ENCODE measurements at regions of chr11 and their contacts with region 1.

Region 1: GRCh38 chr11:8033305-8034105 is 46.4 kb downstream of the EIF3F start:
- DNase-seq: peak; percentile 85 to 95 (median 90)
- H3K4me3 ChIP-seq: no peak overlapping the region
- H3K27ac ChIP-seq: no peak overlapping the region
- H3K4me1 ChIP-seq: peaks cover 0 to 9% (median 3%) of the 10 kb centered on the region in 3 donors
- H3K27me3 ChIP-seq: no peaks in the 10 kb centered on the region
- CTCF ChIP-seq: peak; percentile 88

Region 2: GRCh38 chr11:8099291-8099899 is 65.9 kb after region 1 on chr11:
- intact Hi-C with region 1: loop called (anchors 10 kb)
- DNase-seq: peak in 4 of 5 donors; percentile 82 to 88 (median 83)
- H3K4me3 ChIP-seq: no peak overlapping the region
- H3K27ac ChIP-seq: no peak overlapping the region
- H3K4me1 ChIP-seq: peaks cover 0 to 4% (median 1%) of the 10 kb centered on the region in 3 donors
- H3K27me3 ChIP-seq: no peaks in the 10 kb centered on the region
- CTCF ChIP-seq: peak; percentile 72

Region 3: GRCh38 chr11:8126649-8127289 is 93.3 kb after region 1 on chr11:
- intact Hi-C with region 1: no loop called
- DNase-seq: peak in 2 of 5 donors; percentile 40 to 62
- H3K4me3 ChIP-seq: no peak overlapping the region
- H3K27ac ChIP-seq: no peak overlapping the region
- H3K4me1 ChIP-seq: no peaks in the 10 kb centered on the region
- H3K27me3 ChIP-seq: no peaks in the 10 kb centered on the region
- CTCF ChIP-seq: no peak

Measured in kidney (tissue), 22 donors.